CD14-positive monocyte (primary cell): ENCODE measurements at regions of chr1 and their contacts with region 1.

Region 1: DNA sequence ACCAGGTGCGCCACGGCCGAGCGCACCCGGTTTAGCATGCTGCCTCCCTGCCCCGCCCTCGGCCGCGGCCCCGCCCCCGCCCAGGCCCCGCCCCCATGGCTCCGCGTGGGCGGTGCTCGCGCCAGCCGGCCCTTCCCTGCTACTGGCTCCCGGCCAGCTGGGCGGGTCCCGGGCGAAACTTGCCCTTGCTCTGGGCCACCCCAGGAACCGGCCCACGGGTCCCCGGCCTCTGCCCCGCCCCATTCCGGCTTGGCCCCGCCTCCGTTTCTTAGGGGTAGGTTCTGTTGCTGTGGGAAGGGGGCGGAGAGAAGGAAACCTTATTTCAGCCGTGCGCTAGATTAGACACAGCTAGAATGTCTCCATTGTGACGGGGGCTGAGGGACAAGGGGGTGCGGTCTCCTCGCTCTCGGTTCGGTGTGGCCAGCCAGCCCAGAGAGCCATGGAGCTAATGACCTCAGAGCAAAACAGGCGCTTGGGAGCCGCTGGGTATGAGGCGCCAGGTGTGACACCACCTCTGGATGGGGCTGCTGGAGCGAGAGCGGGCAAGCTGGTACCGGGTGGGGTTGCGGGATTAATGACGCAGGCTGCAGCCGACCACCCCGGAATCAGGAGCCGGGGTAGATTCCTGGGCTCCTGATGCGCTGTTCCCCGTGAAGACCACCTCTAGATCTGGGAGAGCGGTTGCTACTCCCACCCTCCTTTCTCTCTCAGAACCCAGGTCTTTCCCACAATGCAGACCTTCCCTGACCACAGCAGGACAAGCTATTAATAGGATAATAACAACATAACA is at the start of gene PPM1J:
- DNase-seq: peak; percentile 90 to 95 (median 92)
- H3K4me3 ChIP-seq: peak within 1 kb of the TSS; percentile 46 to 76 (median 57)
- H3K4me3 Mint-ChIP-seq: peak within 1 kb of the TSS; percentile 89 to 94
- H3K27ac ChIP-seq: no peak within 1 kb of the TSS
- H3K27ac Mint-ChIP-seq: peak within 1 kb of the TSS in 6 of 7 donors; percentile 40 to 80 (median 70)
- H3K4me1 ChIP-seq: peaks cover 32 to 38% of the 10 kb centered on the region in 2 donors
- H3K4me1 Mint-ChIP-seq: peaks cover 28% of the 10 kb centered on the region
- H3K27me3 ChIP-seq: peaks cover 0 to 14% of the 10 kb centered on the region in 2 donors
- H3K27me3 Mint-ChIP-seq: peaks cover 26 to 46% (median 32%) of the 10 kb centered on the region in 3 donors
- CTCF ChIP-seq: no peak
- polyA plus RNA-seq, gene PPM1J: 0.28 to 0.75 (median 0.69) TPM

Region 2: DNA sequence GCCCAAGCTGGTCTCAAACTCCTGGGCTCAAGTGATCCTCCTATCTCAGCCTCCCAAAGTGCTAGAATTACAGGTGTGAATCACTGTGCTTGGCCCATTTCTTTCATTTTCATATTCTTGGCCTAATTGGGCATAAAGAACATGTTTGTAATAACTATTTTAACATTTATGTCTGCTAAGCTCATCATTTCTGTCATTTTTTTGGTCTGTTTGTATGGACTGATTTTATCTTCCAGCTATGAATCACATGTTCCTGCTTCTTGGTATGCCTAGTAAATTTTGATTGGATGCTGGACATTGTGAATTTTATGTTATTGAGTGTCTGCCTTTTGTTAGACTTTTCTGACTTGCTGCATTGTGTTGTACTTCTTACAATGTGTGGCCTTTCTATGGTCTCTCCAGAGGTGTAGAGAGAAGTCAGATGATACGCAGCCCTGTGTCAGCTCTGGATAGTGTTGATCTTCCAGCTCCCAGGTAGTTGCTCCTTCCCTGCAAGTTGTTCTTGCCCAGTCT is 38.7 kb after region 1 on chr1:
- intact Hi-C with region 1: no loop called
- DNase-seq: no peak
- H3K4me3 ChIP-seq: no peak overlapping the region
- H3K4me3 Mint-ChIP-seq: no peak overlapping the region
- H3K27ac ChIP-seq: no peak overlapping the region
- H3K27ac Mint-ChIP-seq: no peak overlapping the region
- H3K4me1 ChIP-seq: no peaks in the 10 kb centered on the region
- H3K4me1 Mint-ChIP-seq: peaks cover 2% of the 10 kb centered on the region
- H3K27me3 ChIP-seq: peaks cover 0 to 5% of the 10 kb centered on the region in 2 donors
- H3K27me3 Mint-ChIP-seq: peaks cover 11 to 20% (median 12%) of the 10 kb centered on the region in 3 donors
- CTCF ChIP-seq: no peak

Region 3: GRCh38 chr1:112803906-112804762 is 88.7 kb after region 1 on chr1:
- intact Hi-C with region 1: loop called (anchors 2 to 5 kb)
- DNase-seq: peak; percentile 16 to 41 (median 23)
- H3K4me3 ChIP-seq: no peak overlapping the region
- H3K4me3 Mint-ChIP-seq: no peak overlapping the region
- H3K27ac ChIP-seq: no peak overlapping the region
- H3K27ac Mint-ChIP-seq: no peak overlapping the region
- H3K4me1 ChIP-seq: no peaks in the 10 kb centered on the region
- H3K4me1 Mint-ChIP-seq: peaks cover 2% of the 10 kb centered on the region
- H3K27me3 ChIP-seq: no peaks in the 10 kb centered on the region
- H3K27me3 Mint-ChIP-seq: peaks cover 5 to 18% (median 6%) of the 10 kb centered on the region in 3 donors
- CTCF ChIP-seq: peak; percentile 60

Region 4: GRCh38 chr1:112955781-112956543 is 240.5 kb after region 1 on chr1 and contains the start of gene SLC16A1:
- intact Hi-C with region 1: loop called in 1 of 2 experiments (anchors 10 kb)
- DNase-seq: peak; percentile 85 to 91 (median 86)
- H3K4me3 ChIP-seq: peak within 1 kb of the TSS; percentile 58 to 90 (median 85)
- H3K4me3 Mint-ChIP-seq: peak within 1 kb of the TSS; percentile 97 to 100
- H3K27ac ChIP-seq: peak within 1 kb of the TSS; percentile 90 to 91
- H3K27ac Mint-ChIP-seq: peak within 1 kb of the TSS; percentile 90 to 98 (median 96)
- H3K4me1 ChIP-seq: peaks cover 30 to 34% of the 10 kb centered on the region in 2 donors
- H3K4me1 Mint-ChIP-seq: peaks cover 54% of the 10 kb centered on the region
- H3K27me3 ChIP-seq: no peaks in the 10 kb centered on the region
- H3K27me3 Mint-ChIP-seq: peaks cover 0 to 2% (median 0%) of the 10 kb centered on the region in 3 donors
- CTCF ChIP-seq: peak; percentile 29
- polyA plus RNA-seq, gene SLC16A1: 2.4 to 13.1 (median 10.3) TPM

Region 5: GRCh38 chr1:113677250-113678158 is 962.0 kb after region 1 on chr1:
- intact Hi-C with region 1: loop called in 1 of 2 experiments (anchors 5 kb)
- DNase-seq: peak; percentile 15 to 39 (median 30)
- H3K4me3 ChIP-seq: no peak overlapping the region
- H3K4me3 Mint-ChIP-seq: no peak overlapping the region
- H3K27ac ChIP-seq: no peak overlapping the region
- H3K27ac Mint-ChIP-seq: no peak overlapping the region
- H3K4me1 ChIP-seq: peaks cover 10 to 14% of the 10 kb centered on the region in 2 donors
- H3K4me1 Mint-ChIP-seq: peaks cover 22% of the 10 kb centered on the region
- H3K27me3 ChIP-seq: no peaks in the 10 kb centered on the region
- H3K27me3 Mint-ChIP-seq: peaks cover 0 to 4% (median 2%) of the 10 kb centered on the region in 3 donors
- CTCF ChIP-seq: peak; percentile 72